ENCODE measurements at regions of chr5 and their contacts with region 1.

Region 1: DNA sequence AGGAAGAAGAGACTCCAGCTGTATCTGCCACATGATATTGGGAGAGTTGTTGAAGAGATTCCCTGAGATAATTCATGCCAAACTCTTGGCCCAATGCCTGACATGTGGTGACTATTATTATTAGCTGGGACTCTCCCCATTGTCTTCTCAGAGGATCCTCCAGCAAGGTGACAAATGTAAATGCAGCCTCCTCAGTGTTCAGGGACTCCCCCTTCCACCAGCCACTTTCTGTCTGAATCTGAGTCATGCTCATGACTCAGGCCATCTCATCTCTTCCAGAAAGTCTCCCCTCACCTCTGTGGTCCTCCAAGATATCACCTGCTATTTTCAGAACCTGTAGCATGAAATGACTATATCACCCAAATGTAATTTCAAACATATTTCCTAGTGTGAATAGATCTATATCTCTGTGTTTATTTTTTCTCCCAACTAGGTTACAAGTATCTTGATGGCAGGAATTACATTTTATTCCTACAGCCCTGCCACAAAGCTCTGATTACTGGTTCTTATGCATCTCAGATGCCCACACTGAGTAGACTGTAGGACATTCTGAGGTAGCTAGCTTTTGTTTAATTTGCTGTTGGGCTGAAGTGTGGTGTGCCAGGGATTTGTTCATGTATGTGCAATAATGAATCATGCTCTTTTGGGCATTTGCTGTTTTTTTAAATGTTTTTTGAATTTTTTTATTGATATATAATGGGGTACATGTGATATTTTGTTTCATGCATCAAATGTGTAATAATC is 126.6 kb upstream of the IL12B start:
- DNase-seq: peak; percentile 82
- ATAC-seq: peak; percentile 84
- H3K4me3 Mint-ChIP-seq: no peak overlapping the region
- H3K27ac Mint-ChIP-seq: no peak overlapping the region
- H3K4me1 Mint-ChIP-seq: peaks cover 45% of the 10 kb centered on the region
- H3K27me3 Mint-ChIP-seq: peaks cover 37% of the 10 kb centered on the region

Region 2: DNA sequence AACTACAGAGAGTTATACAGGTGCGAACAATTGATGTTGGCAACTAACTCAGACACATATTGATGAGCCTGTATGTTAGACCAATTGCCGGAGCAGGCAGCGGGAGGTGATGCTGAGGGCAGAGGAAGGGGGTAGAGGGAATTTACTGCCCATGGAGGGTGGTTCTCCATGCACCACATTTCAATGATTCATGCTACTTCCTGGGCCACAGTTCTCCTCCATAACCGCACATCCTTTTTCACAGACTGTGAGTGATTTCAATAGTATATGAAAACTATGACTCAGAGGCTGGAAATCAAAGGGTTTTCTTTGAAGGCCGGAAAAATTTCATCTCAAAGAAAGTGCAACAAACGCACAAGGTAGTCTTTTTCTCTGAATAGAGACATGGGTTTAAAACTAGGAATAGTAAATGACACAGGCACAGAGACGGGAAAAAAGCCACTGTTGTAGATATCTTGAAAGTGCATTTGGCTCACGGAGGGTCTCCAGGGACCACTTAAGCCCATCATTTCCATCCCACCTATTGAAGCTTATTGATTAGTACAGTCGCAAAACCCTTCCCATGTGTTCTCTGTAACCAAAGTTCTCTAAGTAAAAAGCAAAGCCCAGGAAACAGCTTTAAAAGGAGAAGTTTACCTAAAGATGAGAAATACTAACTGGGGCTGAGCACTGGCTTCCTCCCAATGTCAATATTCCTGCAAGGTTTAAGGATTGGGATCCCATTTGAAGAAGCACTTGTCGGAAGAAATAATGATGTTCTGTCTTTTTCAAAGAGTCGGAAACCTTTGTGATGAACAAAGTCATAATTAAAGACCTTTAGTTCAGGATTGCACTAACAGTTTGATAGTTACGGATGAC is 1853.3 kb before region 1 on chr5:
- CTCF ChIA-PET with region 1: no interaction called
- POLR2A ChIA-PET with region 1: no interaction called
- intact Hi-C with region 1: loop called in 1 of 2 experiments (anchors 5 kb)
- DNase-seq: peak; percentile 78
- ATAC-seq: peak; percentile 44
- H3K4me3 Mint-ChIP-seq: peak overlapping the region; percentile 49
- H3K27ac Mint-ChIP-seq: peak overlapping the region; percentile 79
- H3K4me1 Mint-ChIP-seq: peaks cover 88% of the 10 kb centered on the region
- H3K27me3 Mint-ChIP-seq: no peaks in the 10 kb centered on the region

Region 3: GRCh38 chr5:158819840-158820620 is 636.9 kb before region 1 on chr5:
- CTCF ChIA-PET with region 1: no interaction called
- POLR2A ChIA-PET with region 1: no interaction called
- intact Hi-C with region 1: loop called (anchors 2 to 5 kb)
- DNase-seq: peak; percentile 41
- ATAC-seq: peak; percentile 99
- H3K4me3 Mint-ChIP-seq: no peak overlapping the region
- H3K27ac Mint-ChIP-seq: peak overlapping the region; percentile 48
- H3K4me1 Mint-ChIP-seq: peaks cover 31% of the 10 kb centered on the region
- H3K27me3 Mint-ChIP-seq: peaks cover 10% of the 10 kb centered on the region

Region 4: DNA sequence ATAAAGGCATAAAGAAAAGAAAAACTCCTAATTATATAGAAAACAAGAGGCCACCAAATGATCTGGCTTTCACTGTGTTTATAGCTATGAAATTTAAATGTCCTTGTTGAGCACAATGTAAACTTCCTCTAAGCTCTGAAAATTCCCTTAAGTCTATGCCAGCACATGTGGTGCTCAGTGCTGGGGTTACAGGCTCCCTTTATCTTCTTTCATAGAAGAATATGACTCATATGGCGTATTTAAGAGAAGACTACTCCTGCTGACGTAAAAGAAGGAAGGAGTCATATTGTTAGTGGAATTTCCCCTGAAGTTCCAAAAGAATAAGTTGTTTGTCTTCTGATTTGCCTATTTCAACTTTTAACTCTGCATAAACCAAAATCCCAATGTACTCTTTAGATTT is 277.9 kb before region 1 on chr5:
- CTCF ChIA-PET with region 1: no interaction called
- POLR2A ChIA-PET with region 1: no interaction called
- intact Hi-C with region 1: loop called (anchors 1 to 5 kb)
- DNase-seq: peak; percentile 55
- ATAC-seq: peak; percentile 92
- H3K4me3 Mint-ChIP-seq: peak overlapping the region; percentile 46
- H3K27ac Mint-ChIP-seq: peak overlapping the region; percentile 91
- H3K4me1 Mint-ChIP-seq: peaks cover 87% of the 10 kb centered on the region
- H3K27me3 Mint-ChIP-seq: no peaks in the 10 kb centered on the region

Region 5: DNA sequence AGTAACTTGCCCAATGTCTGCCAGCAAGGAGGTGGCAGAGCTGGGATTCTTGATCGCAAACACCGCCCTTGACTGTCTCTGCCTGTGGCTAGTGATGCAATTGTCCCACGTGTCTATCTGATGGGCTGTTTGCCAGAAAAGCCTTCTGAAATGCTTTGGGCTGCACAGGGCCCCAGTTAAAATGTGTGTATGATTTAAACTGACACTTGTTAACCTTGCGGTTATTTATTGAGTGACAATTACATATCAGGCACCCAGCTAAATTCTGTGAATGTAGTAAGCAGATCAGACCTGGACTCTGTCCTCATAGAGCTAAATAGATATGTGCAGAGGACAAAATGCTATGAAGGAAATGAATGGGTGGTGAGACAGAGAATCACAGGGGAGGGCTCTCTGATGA is 115.0 kb before region 1 on chr5:
- CTCF ChIA-PET with region 1: no interaction called
- POLR2A ChIA-PET with region 1: no interaction called
- intact Hi-C with region 1: loop called (anchors 2 kb)
- DNase-seq: peak; percentile 53
- ATAC-seq: peak; percentile 41
- H3K4me3 Mint-ChIP-seq: no peak overlapping the region
- H3K27ac Mint-ChIP-seq: peak overlapping the region; percentile 34
- H3K4me1 Mint-ChIP-seq: peaks cover 49% of the 10 kb centered on the region
- H3K27me3 Mint-ChIP-seq: no peaks in the 10 kb centered on the region

Region 6: GRCh38 chr5:159773062-159773924 is 316.4 kb after region 1 on chr5:
- CTCF ChIA-PET with region 1: no interaction called
- POLR2A ChIA-PET with region 1: no interaction called
- intact Hi-C with region 1: loop called (anchors 1 to 2 kb)
- DNase-seq: peak; percentile 92
- ATAC-seq: peak; percentile 91
- H3K4me3 Mint-ChIP-seq: peak overlapping the region; percentile 30
- H3K27ac Mint-ChIP-seq: peak overlapping the region; percentile 37
- H3K4me1 Mint-ChIP-seq: peaks cover 17% of the 10 kb centered on the region
- H3K27me3 Mint-ChIP-seq: peaks cover 46% of the 10 kb centered on the region